GM12878 (cell line): ENCODE measurements at regions of chr10 and their contacts with region 1.

Region 1: DNA sequence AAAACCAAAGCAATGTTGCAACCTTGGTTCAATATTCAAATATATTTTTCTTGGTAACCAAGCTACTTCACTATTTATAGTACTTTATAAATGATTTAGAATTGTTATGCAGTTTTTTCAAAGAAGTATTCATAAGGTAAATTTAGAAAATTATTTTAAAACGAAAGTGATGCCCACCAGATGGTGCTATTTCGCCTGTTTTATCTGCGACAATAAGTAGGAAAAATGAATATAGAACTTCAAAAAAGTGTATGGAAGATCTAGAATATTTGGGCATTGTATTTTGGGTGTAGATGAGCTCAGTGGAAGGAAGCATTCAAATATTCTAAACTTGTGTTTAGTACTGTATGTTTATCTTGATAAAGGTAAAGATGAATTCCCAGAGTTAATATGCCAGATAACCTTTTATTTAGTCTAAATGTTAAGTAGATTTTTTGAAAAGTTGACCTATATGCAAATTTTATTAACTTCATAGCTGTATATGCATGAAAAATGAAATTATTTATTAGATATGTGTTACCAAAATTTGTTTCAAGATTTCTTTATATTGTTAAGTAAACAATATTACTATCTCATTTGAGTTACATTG is 93.2 kb downstream of the ADK start:
- DNase-seq: no peak
- ATAC-seq: no peak
- H3K4me3 ChIP-seq: no peak overlapping the region
- H3K27ac ChIP-seq: no peak overlapping the region
- H3K4me1 ChIP-seq: no peaks in the 10 kb centered on the region
- H3K27me3 ChIP-seq: no peaks in the 10 kb centered on the region
- CTCF ChIP-seq: peak; percentile 16 to 48 (median 40); a peak in 3 of 6 replicates
- EP300 ChIP-seq: no peak
- POLR2A ChIP-seq: no peak
- RAD21 ChIP-seq: peak; percentile 61

Region 2: DNA sequence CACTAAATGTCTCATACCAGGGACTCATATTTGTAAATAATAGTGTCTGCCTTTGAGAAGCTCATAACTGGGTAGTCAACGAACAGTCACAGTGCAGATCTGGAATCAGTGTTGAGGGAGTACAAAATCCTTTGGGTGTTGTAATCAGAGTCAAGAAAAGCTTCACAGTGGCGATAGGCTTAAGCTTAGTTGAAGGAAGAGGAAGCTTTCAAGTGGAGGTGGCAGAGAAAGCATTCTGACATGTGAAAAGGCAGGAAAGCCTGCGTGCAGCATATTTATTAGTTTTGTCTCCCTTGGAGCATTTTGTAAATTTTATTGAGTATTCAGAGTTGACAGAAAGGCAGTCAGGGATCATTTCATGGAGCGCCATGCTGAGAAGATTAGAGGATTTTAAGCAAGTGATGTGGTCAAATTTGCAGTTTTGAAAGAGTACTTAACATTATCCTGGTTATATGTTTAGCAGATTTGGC is 11.7 kb after region 1 on chr10:
- CTCF ChIA-PET with region 1: interaction called, 8 read pairs
- POLR2A ChIA-PET with region 1: no interaction called
- RAD21 ChIA-PET with region 1: interaction called, 3 read pairs
- SMC1A ChIA-PET with region 1: interaction called, 13 read pairs
- in situ Hi-C with region 1: no loop called
- intact Hi-C with region 1: no loop called
- DNase-seq: no peak
- ATAC-seq: no peak; the same call in 2 of the 3 replicates
- H3K4me3 ChIP-seq: no peak overlapping the region
- H3K27ac ChIP-seq: no peak overlapping the region
- H3K4me1 ChIP-seq: 0 out of 2 replicates have a peak, but pooled peaks cover 3% of the 10 kb centered on the region
- H3K27me3 ChIP-seq: no peaks in the 10 kb centered on the region
- CTCF ChIP-seq: no peak
- EP300 ChIP-seq: no peak
- POLR2A ChIP-seq: no peak
- RAD21 ChIP-seq: no peak

Region 3: DNA sequence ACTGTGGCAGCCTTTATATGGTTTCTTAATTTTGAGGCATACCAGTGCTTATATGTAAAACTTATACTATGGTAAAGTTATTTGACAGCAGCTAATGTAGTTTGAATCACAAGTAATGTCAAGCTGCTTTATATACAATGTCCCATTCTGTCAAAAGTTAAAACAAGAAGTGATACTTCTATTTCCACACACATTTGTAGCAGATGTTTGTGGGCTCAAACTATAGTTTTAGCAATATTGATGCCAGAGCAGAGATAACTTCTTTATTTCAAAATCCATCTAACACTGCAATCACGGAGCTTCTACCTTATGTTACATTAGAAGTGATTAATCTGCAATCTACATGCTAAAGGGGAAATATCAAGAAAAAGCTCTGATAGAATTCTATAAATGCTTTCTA is 56.5 kb after region 1 on chr10:
- CTCF ChIA-PET with region 1: no interaction called
- POLR2A ChIA-PET with region 1: no interaction called
- RAD21 ChIA-PET with region 1: no interaction called
- SMC1A ChIA-PET with region 1: no interaction called
- in situ Hi-C with region 1: no loop called
- intact Hi-C with region 1: no loop called
- DNase-seq: no peak
- ATAC-seq: peak; percentile 65
- H3K4me3 ChIP-seq: no peak overlapping the region
- H3K27ac ChIP-seq: no peak overlapping the region
- H3K4me1 ChIP-seq: peaks cover 11% of the 10 kb centered on the region
- H3K27me3 ChIP-seq: no peaks in the 10 kb centered on the region
- CTCF ChIP-seq: no peak
- EP300 ChIP-seq: no peak
- POLR2A ChIP-seq: no peak
- RAD21 ChIP-seq: no peak

Region 4: GRCh38 chr10:74342991-74343390 is 98.8 kb after region 1 on chr10:
- CTCF ChIA-PET with region 1: no interaction called
- POLR2A ChIA-PET with region 1: no interaction called
- RAD21 ChIA-PET with region 1: no interaction called
- SMC1A ChIA-PET with region 1: no interaction called
- in situ Hi-C with region 1: no loop called
- intact Hi-C with region 1: no loop called
- DNase-seq: no peak
- ATAC-seq: no peak
- H3K4me3 ChIP-seq: no peak overlapping the region
- H3K27ac ChIP-seq: no peak overlapping the region
- H3K4me1 ChIP-seq: no peaks in the 10 kb centered on the region
- H3K27me3 ChIP-seq: no peaks in the 10 kb centered on the region
- CTCF ChIP-seq: no peak
- EP300 ChIP-seq: no peak
- POLR2A ChIP-seq: no peak
- RAD21 ChIP-seq: no peak